ENCODE measurements at regions of chr15 and their contacts with region 1.

Region 1: DNA sequence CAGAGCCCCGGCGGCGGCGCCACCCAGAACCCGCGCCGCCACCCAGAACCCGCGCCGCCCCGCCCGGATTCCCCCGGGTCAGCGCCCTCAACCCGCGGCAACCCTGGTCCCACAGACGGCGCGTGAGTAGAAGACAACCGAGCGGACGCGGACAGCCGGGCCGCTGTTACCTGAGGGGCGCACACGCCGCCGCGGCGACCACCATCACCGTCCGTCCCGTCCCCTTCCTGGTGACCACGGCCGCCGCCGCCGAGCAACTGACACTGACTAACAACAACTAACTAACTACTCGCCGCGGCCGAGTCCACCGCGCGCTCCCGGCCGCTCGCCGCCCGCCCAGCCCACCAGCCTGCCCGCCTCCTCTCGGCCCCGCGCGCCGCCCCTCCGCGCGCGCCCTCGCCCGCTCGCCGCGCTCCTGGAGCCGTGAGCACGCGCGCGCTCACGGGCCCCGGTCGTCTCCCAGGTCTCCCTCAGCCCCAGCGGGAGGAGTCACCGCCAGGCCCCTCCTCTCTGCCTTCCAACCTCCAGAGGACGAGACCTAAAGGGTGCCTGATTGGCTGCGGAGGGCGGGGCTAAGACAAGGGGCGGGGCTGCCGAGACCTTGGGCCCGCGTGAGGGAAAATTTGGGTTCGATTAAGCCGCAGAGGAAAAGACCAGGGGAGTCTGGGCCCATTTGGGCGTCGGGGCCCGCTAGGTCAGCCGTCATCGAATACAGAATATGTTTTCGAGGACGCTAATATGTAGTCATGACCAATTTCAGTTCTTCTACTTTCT is at the start of gene PEAK1:
- DNase-seq: peak; percentile 98
- H3K4me3 Mint-ChIP-seq: peak within 1 kb of the TSS; percentile 99
- H3K27ac Mint-ChIP-seq: peak within 1 kb of the TSS; percentile 98
- H3K4me1 Mint-ChIP-seq: peaks cover 60% of the 10 kb centered on the region
- H3K27me3 Mint-ChIP-seq: peaks cover 4% of the 10 kb centered on the region
- total RNA-seq, gene PEAK1: 24.3 and 27.0 TPM in 2 replicates

Region 2: GRCh38 chr15:76931397-76932007 is 488.5 kb before region 1 on chr15 and contains the start of gene RCN2:
- intact Hi-C with region 1: loop called (anchors 1 kb)
- DNase-seq: peak; percentile 93
- H3K4me3 Mint-ChIP-seq: peak within 1 kb of the TSS; percentile 92
- H3K27ac Mint-ChIP-seq: peak within 1 kb of the TSS; percentile 84
- H3K4me1 Mint-ChIP-seq: peaks cover 44% of the 10 kb centered on the region
- H3K27me3 Mint-ChIP-seq: peaks cover 5% of the 10 kb centered on the region
- total RNA-seq, gene RCN2: 39.9 and 42.2 TPM in 2 replicates

Region 3: DNA sequence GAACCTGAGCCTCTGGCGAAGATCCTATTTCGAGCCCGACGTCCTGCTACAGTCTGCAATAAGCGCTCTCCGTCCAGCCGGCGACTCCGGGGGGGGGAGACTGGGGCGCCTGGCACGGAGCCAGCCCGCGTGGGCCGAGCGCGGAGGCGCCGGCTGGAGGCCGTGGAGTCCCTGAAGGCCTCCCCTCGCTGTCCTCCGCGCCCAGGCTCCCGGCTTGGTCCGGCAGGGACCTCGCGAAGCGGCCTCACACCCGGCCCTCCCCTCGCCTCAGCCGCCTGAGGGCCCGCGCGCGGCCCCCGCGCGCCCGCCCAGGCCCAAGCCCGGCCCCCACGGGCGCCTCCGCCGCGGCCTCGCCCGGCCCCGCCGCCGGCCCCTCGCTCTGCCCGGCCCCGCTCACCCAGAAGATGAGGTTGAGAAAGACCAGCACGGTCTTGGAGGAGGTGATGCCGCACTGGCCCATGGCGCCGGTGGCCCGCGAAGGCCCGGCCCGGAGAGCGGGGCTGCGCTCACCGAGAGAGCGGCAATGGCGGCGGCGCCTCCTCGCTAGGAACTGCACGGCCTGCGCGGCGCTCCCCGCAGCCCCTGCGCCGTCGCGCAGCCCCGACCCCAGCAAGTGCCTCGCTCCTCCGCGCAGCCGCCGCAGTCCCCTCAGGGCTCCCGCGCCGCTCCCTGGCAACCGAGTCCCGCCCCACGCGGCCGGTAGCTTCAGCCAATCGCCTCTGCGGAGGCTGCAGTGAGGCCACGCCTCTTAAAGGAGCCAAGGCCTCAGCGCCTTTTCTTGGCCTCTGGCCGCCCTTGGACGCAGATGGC is 349.3 kb before region 1 on chr15 and contains the start of gene TSPAN3:
- intact Hi-C with region 1: loop called (anchors 2 kb)
- DNase-seq: peak; percentile 91
- H3K4me3 Mint-ChIP-seq: peak within 1 kb of the TSS; percentile 87
- H3K27ac Mint-ChIP-seq: peak within 1 kb of the TSS; percentile 42
- H3K4me1 Mint-ChIP-seq: peaks cover 27% of the 10 kb centered on the region
- H3K27me3 Mint-ChIP-seq: peaks cover 19% of the 10 kb centered on the region
- total RNA-seq, gene TSPAN3: 41.5 and 41.6 TPM in 2 replicates

Region 4: GRCh38 chr15:77402740-77403379 is 17.2 kb before region 1 on chr15:
- intact Hi-C with region 1: loop called (anchors 1 kb)
- DNase-seq: no peak
- H3K4me3 Mint-ChIP-seq: no peak overlapping the region
- H3K27ac Mint-ChIP-seq: peak overlapping the region; percentile 8
- H3K4me1 Mint-ChIP-seq: peaks cover 38% of the 10 kb centered on the region
- H3K27me3 Mint-ChIP-seq: no peaks in the 10 kb centered on the region

Region 5: DNA sequence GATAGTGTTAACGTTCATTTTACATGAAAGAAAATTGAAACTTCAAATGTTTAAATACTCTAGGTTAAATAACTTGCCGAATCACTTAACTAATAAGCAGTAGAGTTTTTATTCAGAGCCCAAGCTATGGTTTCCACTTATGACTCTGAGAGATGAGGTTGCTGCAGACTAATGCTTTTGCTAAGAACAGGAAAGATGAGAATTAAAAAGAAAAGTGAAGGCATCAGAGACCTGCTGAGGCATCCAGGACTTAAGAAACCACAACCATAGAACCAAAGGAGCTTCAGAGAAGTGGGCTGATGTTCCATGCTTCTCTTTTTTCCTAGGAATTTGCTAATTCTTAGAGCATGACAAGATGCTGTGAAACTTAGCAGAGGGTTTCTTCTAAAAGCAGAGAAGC is 10.2 kb after region 1 on chr15:
- intact Hi-C with region 1: loop called (anchors 1 kb)
- DNase-seq: no peak
- H3K4me3 Mint-ChIP-seq: no peak overlapping the region
- H3K27ac Mint-ChIP-seq: peak overlapping the region; percentile 30
- H3K4me1 Mint-ChIP-seq: peaks cover 34% of the 10 kb centered on the region
- H3K27me3 Mint-ChIP-seq: no peaks in the 10 kb centered on the region

Region 6: DNA sequence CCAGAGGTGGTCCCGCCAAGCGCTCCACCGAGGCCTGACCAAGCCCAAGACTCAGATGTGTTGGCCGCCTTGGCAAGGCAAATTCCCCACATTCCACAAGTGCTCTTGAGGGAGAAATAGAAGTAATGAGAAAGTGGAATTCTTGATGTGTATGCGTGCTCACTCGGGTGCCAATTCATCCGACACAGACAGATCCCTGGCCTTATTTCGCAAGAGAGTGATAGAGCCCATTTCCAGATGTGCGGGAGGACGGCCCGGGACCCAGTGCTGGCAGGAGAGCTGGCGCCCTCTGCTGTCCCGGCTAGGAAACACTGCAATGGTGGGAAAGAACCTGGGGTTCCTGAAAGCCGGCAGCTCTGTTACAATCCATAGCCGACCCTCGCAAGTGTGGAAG is 76.7 kb after region 1 on chr15:
- intact Hi-C with region 1: loop called (anchors 5 kb)
- DNase-seq: peak; percentile 54
- H3K4me3 Mint-ChIP-seq: no peak overlapping the region
- H3K27ac Mint-ChIP-seq: no peak overlapping the region
- H3K4me1 Mint-ChIP-seq: peaks cover 20% of the 10 kb centered on the region
- H3K27me3 Mint-ChIP-seq: no peaks in the 10 kb centered on the region

Region 7: DNA sequence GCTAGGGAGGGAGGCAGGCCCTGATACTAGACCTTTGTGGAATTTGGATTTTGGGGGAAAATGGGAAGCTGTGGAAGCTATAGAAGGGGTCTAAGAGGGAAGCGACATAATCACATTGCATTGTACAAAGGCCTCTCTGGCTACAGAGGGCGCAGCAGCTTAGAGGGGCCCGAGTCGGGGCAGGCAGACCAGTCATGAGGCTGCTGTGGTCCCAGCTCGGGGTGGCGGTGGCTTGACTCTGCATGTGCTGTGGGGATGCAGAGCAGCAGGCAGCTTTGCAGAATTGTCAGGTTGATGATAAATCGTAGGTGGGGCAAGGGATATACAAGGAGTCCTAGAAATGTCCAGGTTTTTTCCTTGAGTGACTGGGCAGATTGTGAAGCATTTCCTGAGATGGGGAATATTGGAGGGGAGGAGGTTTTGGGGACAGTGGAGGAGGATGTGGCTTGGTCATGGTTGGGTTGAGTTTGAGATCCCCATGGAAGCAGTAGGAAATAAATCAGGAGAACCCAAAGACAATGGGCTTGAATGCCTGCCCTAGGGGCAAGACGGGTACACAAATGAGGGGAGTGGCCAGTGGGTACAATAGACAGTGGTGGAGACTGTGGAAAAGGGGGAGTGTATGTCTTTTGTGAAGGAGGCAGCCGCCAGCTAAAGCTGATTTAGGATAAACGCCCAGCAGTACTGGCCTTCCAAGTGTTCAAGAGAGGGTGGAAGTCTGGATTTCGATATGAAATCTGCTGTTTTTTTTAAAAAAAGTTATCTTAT is 94.8 kb after region 1 on chr15:
- intact Hi-C with region 1: no loop called
- DNase-seq: no peak
- H3K4me3 Mint-ChIP-seq: no peak overlapping the region
- H3K27ac Mint-ChIP-seq: no peak overlapping the region
- H3K4me1 Mint-ChIP-seq: no peaks in the 10 kb centered on the region
- H3K27me3 Mint-ChIP-seq: peaks cover 4% of the 10 kb centered on the region

Measured in activated T-helper 1 cell treated with anti-CD3 and anti-CD28 coated beads, Interleukin-12 subunit alpha, Interleukin-12 subunit beta, Interleukin-2, Interleukin-4 antibody, amounts not matched to agents 30 ng/mL and 10 ng/mL and 1 ng/mL, durations not matched to agents 14 hours and 24 hours and 36 hours (primary cell).